ENCODE measurements at regions of chr5 and their contacts with region 1.

Region 1: DNA sequence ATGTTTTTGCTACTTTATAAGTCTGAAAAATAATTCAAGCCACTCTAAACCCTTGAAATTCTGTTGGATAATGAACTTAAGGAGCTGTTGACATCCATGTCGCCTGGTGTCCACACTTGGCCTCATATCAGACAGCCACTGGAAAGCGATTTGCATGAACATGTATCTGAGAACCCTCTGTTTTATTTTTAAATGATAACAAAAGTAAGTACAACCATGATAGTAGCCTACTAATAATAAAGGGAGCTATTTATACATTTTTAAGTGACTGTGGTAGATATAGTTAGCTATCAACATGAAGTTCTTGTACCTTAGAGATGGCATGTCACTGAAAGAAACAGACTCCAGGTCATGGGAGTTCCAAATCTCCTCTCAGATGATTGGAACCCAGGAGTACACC is 53.3 kb downstream of the PLCXD3 start:
- DNase-seq: no peak
- H3K4me3 ChIP-seq: no peak overlapping the region
- H3K4me3 Mint-ChIP-seq: no peak overlapping the region
- H3K27ac Mint-ChIP-seq: no peak overlapping the region
- H3K4me1 ChIP-seq: peaks cover 12% of the 10 kb centered on the region; the same call in 1 of the 2 replicates
- H3K4me1 Mint-ChIP-seq: no peaks in the 10 kb centered on the region
- H3K27me3 ChIP-seq: no peaks in the 10 kb centered on the region
- H3K27me3 Mint-ChIP-seq: no peaks in the 10 kb centered on the region
- CTCF ChIP-seq: no peak

Region 2: DNA sequence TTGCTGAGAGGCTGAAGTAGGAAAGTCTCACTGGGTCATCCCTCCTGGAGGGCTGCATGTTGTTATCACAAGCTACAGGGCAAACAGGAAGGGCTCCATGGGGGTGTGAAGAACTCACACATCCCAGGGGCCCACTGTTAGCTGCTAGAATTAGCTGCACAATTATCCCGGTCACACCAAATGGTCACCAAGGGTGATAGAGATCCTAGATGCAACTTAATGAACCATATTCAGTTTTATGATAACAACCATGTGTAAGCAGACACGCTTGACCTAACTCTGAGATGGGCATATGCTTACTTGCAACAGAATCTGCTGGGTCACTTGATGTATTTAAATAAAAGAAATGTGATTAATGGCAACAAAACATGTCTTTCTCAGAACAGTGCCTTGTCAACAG is 100.3 kb before region 1 on chr5:
- CTCF ChIA-PET with region 1: no interaction called
- POLR2A ChIA-PET with region 1: no interaction called
- intact Hi-C with region 1: loop called (anchors 10 kb)
- DNase-seq: no peak
- H3K4me3 ChIP-seq: no peak overlapping the region
- H3K4me3 Mint-ChIP-seq: no peak overlapping the region
- H3K27ac Mint-ChIP-seq: no peak overlapping the region
- H3K4me1 ChIP-seq: no peaks in the 10 kb centered on the region
- H3K4me1 Mint-ChIP-seq: no peaks in the 10 kb centered on the region
- H3K27me3 ChIP-seq: no peaks in the 10 kb centered on the region
- H3K27me3 Mint-ChIP-seq: no peaks in the 10 kb centered on the region
- CTCF ChIP-seq: no peak

Region 3: GRCh38 chr5:41445932-41446563 is 11.0 kb before region 1 on chr5:
- CTCF ChIA-PET with region 1: no interaction called
- POLR2A ChIA-PET with region 1: no interaction called
- intact Hi-C with region 1: no loop called
- DNase-seq: no peak
- H3K4me3 ChIP-seq: no peak overlapping the region
- H3K4me3 Mint-ChIP-seq: no peak overlapping the region
- H3K27ac Mint-ChIP-seq: no peak overlapping the region
- H3K4me1 ChIP-seq: no peaks in the 10 kb centered on the region
- H3K4me1 Mint-ChIP-seq: no peaks in the 10 kb centered on the region
- H3K27me3 ChIP-seq: no peaks in the 10 kb centered on the region
- H3K27me3 Mint-ChIP-seq: no peaks in the 10 kb centered on the region
- CTCF ChIP-seq: no peak

Measured in Caco-2 (cell line).